ENCODE measurements at regions of chr2 and their contacts with region 1.

Region 1: DNA sequence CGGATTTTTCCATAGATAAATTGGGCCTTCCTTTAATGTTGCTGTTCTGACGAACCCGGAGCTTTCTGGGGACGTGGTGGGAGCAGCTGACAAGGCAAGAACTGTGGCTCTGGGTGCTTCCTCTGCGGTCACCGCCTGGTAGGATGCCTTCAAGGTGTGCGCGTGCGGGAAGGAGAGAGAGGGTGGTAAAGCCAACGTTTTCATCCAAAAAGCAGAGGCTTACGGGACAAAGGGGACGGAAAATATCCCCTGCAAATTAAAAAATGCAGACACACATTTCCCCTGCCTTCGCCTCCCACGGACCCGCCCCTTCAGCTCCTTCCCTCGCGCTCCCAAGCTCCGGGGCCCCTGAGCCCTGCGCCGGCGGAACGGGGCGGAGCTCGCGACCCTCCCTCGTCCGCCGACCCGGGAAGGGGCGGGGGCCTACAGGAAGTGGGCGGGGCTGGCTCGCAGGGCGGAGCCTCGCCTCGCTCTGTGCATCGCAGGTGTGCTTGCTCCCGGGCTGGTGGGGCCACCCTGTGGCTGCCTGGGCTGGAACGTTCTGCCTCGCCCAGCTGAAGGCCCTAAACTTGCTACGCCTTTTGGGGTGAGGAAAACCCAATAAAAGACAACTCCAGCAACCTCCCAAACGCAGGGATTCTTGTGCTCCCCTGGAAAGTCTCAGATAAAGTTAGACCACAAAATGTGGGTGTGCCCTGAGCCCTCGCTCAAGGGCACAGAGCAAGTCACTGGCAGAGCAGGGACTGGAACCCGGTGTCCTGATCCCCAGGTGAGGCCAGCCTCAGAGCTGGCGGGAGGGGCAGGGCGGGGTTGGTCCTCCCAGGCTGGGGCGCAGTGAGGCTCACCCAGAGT is 25.4 kb upstream of the SLC66A3 start:
- DNase-seq: peak; percentile 71
- ATAC-seq: peak; percentile 88
- H3K4me3 Mint-ChIP-seq: peak overlapping the region; percentile 78
- H3K27ac Mint-ChIP-seq: no peak overlapping the region
- H3K4me1 Mint-ChIP-seq: peaks cover 34% of the 10 kb centered on the region
- H3K27me3 Mint-ChIP-seq: peaks cover 5% of the 10 kb centered on the region
- CTCF ChIP-seq: no peak

Region 2: GRCh38 chr2:10798783-10799182 is 331.0 kb before region 1 on chr2:
- CTCF ChIA-PET with region 1: no interaction called
- POLR2A ChIA-PET with region 1: no interaction called
- intact Hi-C with region 1: no loop called
- DNase-seq: no peak
- ATAC-seq: no peak
- H3K4me3 Mint-ChIP-seq: no peak overlapping the region
- H3K27ac Mint-ChIP-seq: no peak overlapping the region
- H3K4me1 Mint-ChIP-seq: peaks cover 12% of the 10 kb centered on the region
- H3K27me3 Mint-ChIP-seq: no peaks in the 10 kb centered on the region
- CTCF ChIP-seq: no peak

Region 3: DNA sequence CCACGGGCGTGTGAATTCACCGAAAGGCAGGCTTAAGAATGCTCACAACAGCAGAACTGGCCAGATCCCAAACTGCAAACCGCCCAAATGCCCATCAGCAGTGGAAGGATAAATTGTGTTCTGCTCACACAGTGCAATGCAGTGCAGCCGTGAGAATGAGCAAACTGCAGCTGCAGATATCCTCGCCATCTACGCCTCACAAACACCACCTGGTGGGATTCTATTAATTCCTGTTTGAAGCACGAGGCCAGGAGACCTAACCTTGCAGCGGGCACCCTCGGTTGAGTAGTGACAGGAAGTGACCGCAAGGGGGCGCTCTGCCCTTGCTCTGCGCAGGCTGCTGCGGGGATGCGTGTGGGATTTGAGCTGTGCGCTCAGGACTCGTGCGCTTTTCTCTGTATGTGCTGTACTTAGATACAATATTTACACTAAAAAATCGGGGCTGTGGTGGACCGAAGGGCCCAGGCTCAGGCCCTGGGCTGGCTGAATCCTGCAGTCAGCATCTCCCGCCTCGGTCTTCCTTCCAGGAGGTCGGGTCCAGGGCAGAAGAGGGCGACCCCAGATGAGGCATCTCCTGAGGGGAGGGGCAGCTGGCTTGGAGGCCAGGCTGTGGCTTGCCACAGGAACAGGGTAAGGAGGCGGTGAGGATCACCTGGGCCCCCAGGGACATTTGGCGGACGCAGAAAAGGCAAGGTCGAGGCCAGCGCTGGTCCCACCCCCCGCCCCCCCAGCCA is 297.5 kb before region 1 on chr2:
- CTCF ChIA-PET with region 1: interaction called, 22 read pairs
- POLR2A ChIA-PET with region 1: no interaction called
- intact Hi-C with region 1: loop called (anchors 1 kb)
- DNase-seq: peak; percentile 69
- ATAC-seq: peak; percentile 92
- H3K4me3 Mint-ChIP-seq: no peak overlapping the region
- H3K27ac Mint-ChIP-seq: no peak overlapping the region
- H3K4me1 Mint-ChIP-seq: peaks cover 8% of the 10 kb centered on the region
- H3K27me3 Mint-ChIP-seq: peaks cover 37% of the 10 kb centered on the region
- CTCF ChIP-seq: peak; percentile 88

Region 4: DNA sequence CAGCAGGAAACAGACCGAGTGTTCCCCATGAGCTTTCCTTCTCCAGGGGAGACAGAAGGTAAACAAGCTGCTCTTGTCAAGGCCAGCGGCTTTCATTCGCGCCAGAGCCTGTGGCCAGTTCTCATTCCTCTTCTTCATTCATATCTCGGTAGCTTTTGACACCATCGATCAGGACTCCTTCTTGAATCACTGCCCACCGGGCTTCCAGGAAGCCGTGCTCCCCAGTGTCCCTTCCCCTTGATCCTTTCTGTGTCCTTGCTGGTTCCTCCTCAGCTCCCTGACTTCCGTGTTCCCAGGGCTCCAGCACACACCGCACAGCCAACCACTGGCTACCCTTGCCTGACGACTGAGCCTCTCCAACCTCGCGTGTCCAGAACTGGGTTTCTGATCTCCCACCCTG is 39.5 kb after region 1 on chr2:
- CTCF ChIA-PET with region 1: no interaction called
- POLR2A ChIA-PET with region 1: no interaction called
- intact Hi-C with region 1: no loop called
- DNase-seq: no peak
- ATAC-seq: no peak
- H3K4me3 Mint-ChIP-seq: no peak overlapping the region
- H3K27ac Mint-ChIP-seq: no peak overlapping the region
- H3K4me1 Mint-ChIP-seq: no peaks in the 10 kb centered on the region
- H3K27me3 Mint-ChIP-seq: no peaks in the 10 kb centered on the region
- CTCF ChIP-seq: no peak

Region 5: GRCh38 chr2:11200651-11201050 is 70.8 kb after region 1 on chr2:
- CTCF ChIA-PET with region 1: interaction called, 10 read pairs
- POLR2A ChIA-PET with region 1: no interaction called
- intact Hi-C with region 1: no loop called
- DNase-seq: no peak
- ATAC-seq: no peak
- H3K4me3 Mint-ChIP-seq: no peak overlapping the region
- H3K27ac Mint-ChIP-seq: no peak overlapping the region
- H3K4me1 Mint-ChIP-seq: peaks cover 7% of the 10 kb centered on the region
- H3K27me3 Mint-ChIP-seq: no peaks in the 10 kb centered on the region
- CTCF ChIP-seq: no peak

Region 6: DNA sequence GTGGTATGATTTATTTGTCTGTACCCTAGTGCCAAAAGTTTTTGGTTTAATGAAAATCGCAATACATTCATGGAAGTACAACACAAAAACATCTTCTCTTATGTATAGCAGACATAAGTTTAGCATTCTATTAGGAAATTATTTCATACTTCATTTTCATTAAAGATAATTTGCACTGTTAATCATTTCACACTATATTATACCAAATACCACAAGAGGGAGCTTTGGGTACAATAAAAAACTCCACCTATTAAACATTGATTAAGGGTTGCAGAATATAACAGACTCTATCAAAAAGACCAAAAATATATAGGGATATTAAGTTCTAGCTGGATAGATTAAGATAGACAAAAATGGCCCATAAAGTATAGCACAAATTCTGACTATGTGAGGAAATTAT is 104.5 kb after region 1 on chr2:
- CTCF ChIA-PET with region 1: interaction called, 7 read pairs
- POLR2A ChIA-PET with region 1: no interaction called
- intact Hi-C with region 1: loop called (anchors 5 kb)
- DNase-seq: no peak
- ATAC-seq: no peak
- H3K4me3 Mint-ChIP-seq: no peak overlapping the region
- H3K27ac Mint-ChIP-seq: no peak overlapping the region
- H3K4me1 Mint-ChIP-seq: peaks cover 5% of the 10 kb centered on the region
- H3K27me3 Mint-ChIP-seq: no peaks in the 10 kb centered on the region
- CTCF ChIP-seq: no peak

Region 7: DNA sequence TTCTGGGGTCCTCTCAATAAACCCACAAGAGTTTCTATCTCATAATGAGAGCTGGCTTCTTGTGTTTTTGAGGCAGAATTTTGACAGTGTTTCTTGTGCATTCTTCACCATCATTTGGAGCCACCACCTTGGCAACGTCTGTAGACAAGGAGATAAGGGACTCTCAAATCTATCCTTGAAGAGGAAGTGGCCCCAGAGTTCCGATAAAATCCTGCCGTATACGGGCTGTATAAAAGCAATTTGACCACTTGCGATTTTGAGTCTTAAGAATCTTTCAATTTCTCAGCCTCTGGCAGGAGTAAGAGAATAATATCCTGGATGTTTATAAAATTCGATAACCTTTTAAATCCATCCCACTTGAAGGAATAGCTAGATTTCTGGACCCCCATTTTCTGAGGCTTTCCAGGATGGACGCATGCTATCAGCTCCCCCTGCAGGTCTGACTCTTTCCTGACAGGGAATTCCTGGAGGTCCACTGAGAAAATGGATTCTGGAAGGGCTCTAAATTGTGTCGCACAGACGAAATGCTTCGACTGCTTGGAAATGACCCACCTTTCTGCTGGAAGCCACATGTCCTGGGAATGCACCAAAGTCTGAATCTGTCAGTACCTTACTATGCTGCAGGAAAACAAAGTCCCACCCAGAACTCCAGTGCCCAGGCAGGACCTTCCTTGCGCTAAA is 282.1 kb after region 1 on chr2:
- CTCF ChIA-PET with region 1: interaction called, 19 read pairs
- POLR2A ChIA-PET with region 1: no interaction called
- intact Hi-C with region 1: loop called (anchors 1 kb)
- DNase-seq: no peak
- ATAC-seq: no peak
- H3K4me3 Mint-ChIP-seq: no peak overlapping the region
- H3K27ac Mint-ChIP-seq: no peak overlapping the region
- H3K4me1 Mint-ChIP-seq: no peaks in the 10 kb centered on the region
- H3K27me3 Mint-ChIP-seq: peaks cover 9% of the 10 kb centered on the region
- CTCF ChIP-seq: no peak

Region 8: DNA sequence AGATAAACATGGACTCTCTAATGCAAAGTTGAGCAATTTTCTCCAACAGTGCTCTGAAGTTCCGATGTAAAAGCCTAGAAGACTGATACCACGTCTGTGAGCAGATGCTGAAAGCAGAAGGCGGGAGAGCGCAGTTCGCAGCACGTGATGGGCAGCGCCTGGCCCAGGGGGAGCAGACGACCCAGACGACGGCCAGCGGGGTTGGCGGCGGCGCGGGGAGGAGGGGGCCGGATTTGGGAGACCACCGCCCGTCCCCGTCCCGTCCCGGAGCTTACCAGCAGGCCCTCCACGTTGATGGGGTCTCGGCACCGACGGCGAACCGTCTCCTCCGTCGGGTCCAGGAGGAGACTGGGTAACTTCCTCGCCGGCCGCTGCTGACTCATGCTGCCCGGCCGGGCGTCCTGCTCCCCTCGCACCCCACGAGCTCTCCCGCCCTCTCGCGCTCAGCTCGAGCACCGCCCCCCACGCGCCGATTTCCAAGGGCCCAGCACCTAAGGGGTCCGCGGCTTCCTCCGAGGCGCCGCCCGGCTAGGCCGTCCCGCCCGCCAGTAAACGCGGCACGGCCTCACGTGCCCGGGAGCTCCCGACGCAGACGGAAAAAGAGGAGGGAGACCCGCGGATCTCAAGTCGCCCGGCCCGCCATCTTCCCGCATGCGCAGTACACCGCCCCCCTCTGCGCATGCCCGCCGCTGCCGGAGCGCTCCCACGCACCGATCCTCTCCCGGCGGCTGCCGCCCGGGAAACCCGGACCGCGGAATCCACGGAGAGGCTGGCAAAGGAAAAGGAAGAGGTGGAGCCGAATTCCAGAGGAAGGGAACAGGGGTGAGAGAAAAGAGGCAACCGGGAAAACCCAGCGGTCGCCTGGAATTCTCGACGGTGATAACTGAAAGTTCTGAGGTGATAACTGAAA is 335.9 kb after region 1 on chr2 and contains the start of gene E2F6:
- CTCF ChIA-PET with region 1: interaction called, 4 read pairs
- POLR2A ChIA-PET with region 1: interaction called, 4 read pairs
- intact Hi-C with region 1: loop called (anchors 5 kb)
- DNase-seq: peak; percentile 93
- ATAC-seq: peak; percentile 81
- H3K4me3 Mint-ChIP-seq: peak within 1 kb of the TSS; percentile 98
- H3K27ac Mint-ChIP-seq: peak within 1 kb of the TSS; percentile 89
- H3K4me1 Mint-ChIP-seq: peaks cover 31% of the 10 kb centered on the region
- H3K27me3 Mint-ChIP-seq: no peaks in the 10 kb centered on the region
- CTCF ChIP-seq: no peak
- total RNA-seq, gene E2F6: 11.8 and 12.4 TPM in 2 replicates

Region 9: GRCh38 chr2:11688222-11689069 is 558.6 kb after region 1 on chr2:
- CTCF ChIA-PET with region 1: no interaction called
- POLR2A ChIA-PET with region 1: no interaction called
- intact Hi-C with region 1: loop called (anchors 10 kb)
- DNase-seq: peak; percentile 68
- ATAC-seq: peak; percentile 87
- H3K4me3 Mint-ChIP-seq: peak overlapping the region; percentile 39
- H3K27ac Mint-ChIP-seq: no peak overlapping the region
- H3K4me1 Mint-ChIP-seq: peaks cover 9% of the 10 kb centered on the region
- H3K27me3 Mint-ChIP-seq: peaks cover 8% of the 10 kb centered on the region
- CTCF ChIP-seq: no peak

Region 10: DNA sequence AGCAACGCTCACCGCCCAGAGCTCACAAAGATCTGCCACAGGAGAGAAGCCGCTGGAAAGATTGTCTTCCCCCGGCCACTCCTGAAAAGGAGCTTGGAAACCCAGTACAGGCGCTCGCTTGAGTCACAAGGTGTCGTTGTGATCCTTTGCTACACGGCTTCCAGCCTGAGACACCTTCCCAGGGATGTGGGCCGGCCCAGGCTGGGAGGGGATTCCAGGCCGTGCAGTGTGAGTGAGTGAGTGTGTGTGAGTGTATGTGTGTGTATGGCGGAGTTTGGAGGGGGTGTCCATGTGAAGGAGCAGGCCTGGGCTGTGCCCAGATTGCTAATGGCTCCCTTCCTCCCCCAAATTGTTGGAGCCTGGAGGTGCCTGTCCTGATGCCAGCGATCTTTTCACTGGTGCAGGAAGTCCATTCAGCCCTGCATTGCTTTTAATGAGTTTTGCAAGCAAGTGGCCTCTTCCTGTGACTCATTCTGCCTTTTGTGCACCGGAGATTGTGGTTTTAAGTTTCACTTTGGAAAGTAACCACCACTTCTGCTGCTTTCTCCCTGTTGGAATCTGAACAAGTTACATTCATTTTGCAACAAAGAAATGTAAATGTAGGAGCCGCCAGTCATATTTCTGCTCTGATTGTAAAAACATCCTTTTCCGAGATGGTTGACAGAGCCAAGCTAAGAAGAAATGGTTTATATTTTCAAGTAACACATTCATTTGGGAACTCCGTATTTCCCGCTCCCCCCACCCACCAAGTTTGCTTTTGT is 700.3 kb after region 1 on chr2:
- CTCF ChIA-PET with region 1: no interaction called
- POLR2A ChIA-PET with region 1: no interaction called
- intact Hi-C with region 1: no loop called
- DNase-seq: peak; percentile 40
- ATAC-seq: peak; percentile 66
- H3K4me3 Mint-ChIP-seq: peak overlapping the region; percentile 75
- H3K27ac Mint-ChIP-seq: peak overlapping the region; percentile 75
- H3K4me1 Mint-ChIP-seq: peaks cover 64% of the 10 kb centered on the region
- H3K27me3 Mint-ChIP-seq: no peaks in the 10 kb centered on the region
- CTCF ChIP-seq: no peak